PC-3 (cell line): ENCODE measurements at regions of chr20 and their contacts with region 1.

Region 1: GRCh38 chr20:15673206-15673605 is 900.0 kb downstream of the KIF16B start:
- DNase-seq: peak; percentile 96
- ATAC-seq: peak; percentile 77
- H3K4me3 ChIP-seq: no peak overlapping the region
- H3K27ac ChIP-seq: peak overlapping the region; percentile 40
- H3K4me1 ChIP-seq: peaks cover 46% of the 10 kb centered on the region
- H3K27me3 ChIP-seq: no peaks in the 10 kb centered on the region
- CTCF ChIP-seq: no peak

Region 2: GRCh38 chr20:14657266-14658005 is 1015.8 kb before region 1 on chr20:
- CTCF ChIA-PET with region 1: no interaction called
- POLR2A ChIA-PET with region 1: interaction called, 12 read pairs
- intact Hi-C with region 1: no loop called
- DNase-seq: no peak
- ATAC-seq: no peak
- H3K4me3 ChIP-seq: no peak overlapping the region
- H3K27ac ChIP-seq: no peak overlapping the region
- H3K4me1 ChIP-seq: no peaks in the 10 kb centered on the region
- H3K27me3 ChIP-seq: no peaks in the 10 kb centered on the region
- CTCF ChIP-seq: no peak

Region 3: GRCh38 chr20:15422966-15423365 is 250.2 kb before region 1 on chr20:
- CTCF ChIA-PET with region 1: no interaction called
- POLR2A ChIA-PET with region 1: no interaction called
- intact Hi-C with region 1: no loop called
- DNase-seq: no peak
- ATAC-seq: no peak
- H3K4me3 ChIP-seq: no peak overlapping the region
- H3K27ac ChIP-seq: no peak overlapping the region
- H3K4me1 ChIP-seq: 0 out of 2 replicates have a peak, but pooled peaks cover 4% of the 10 kb centered on the region
- H3K27me3 ChIP-seq: no peaks in the 10 kb centered on the region; the same call in 1 of the 2 replicates
- CTCF ChIP-seq: no peak

Region 4: DNA sequence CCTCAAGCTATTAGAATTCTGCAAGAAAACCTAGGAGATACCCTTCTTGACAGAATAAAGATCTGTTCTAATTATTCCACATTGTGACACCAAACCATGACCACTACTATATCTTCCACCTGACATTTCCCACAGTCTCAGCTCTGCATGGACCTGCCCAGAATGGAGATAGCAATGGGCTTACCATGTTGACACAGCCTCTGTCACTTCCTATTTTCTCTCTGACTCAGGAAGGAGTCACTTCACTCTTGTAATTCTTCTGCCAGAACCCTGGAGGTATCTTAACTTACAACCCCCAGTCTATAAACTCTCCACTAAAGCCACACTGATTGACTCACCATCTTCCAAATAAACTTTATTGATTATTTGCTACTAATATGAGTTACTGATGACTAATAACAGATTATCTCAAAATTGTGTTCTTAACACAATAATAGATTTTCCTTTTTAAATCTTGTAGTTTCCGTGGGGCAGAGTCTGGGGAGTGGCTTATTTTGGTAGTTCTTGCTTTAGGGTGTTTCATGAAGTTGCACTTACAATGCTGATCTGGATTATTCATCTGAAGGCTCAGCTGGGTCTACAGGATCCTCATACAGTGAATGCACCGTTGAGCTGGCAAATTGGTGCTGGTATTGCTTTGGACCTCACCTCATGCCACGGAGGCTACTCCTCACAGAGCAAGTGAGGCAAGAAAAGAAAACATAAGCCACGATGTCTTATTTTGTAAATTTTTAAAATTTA is 30.1 kb after region 1 on chr20:
- CTCF ChIA-PET with region 1: no interaction called
- POLR2A ChIA-PET with region 1: no interaction called
- intact Hi-C with region 1: loop called (anchors 1 kb)
- DNase-seq: peak; percentile 99
- ATAC-seq: peak; percentile 98
- H3K4me3 ChIP-seq: no peak overlapping the region
- H3K27ac ChIP-seq: peak overlapping the region; percentile 88
- H3K4me1 ChIP-seq: peaks cover 39% of the 10 kb centered on the region
- H3K27me3 ChIP-seq: no peaks in the 10 kb centered on the region
- CTCF ChIP-seq: no peak

Region 5: GRCh38 chr20:15739056-15739455 is 65.8 kb after region 1 on chr20:
- CTCF ChIA-PET with region 1: no interaction called
- POLR2A ChIA-PET with region 1: no interaction called
- intact Hi-C with region 1: loop called (anchors 5 kb)
- DNase-seq: peak; percentile 44
- ATAC-seq: peak; percentile 30; the same call in 1 of the 2 replicates
- H3K4me3 ChIP-seq: no peak overlapping the region
- H3K27ac ChIP-seq: no peak overlapping the region
- H3K4me1 ChIP-seq: peaks cover 25% of the 10 kb centered on the region
- H3K27me3 ChIP-seq: no peaks in the 10 kb centered on the region
- CTCF ChIP-seq: no peak